Activated CD8-positive, alpha-beta memory T cell treated with anti-CD3 and anti-CD28 coated beads, Interleukin-2, amount 10 ng/mL, durations not matched to agents 7 days and 5 days (primary cell): ENCODE measurements at regions of chr9 and their contacts with region 1.

Region 1: GRCh38 chr9:85425153-85425611 is 316.6 kb downstream of the AGTPBP1 start:
- DNase-seq: peak; percentile 63
- ATAC-seq: peak; percentile 55
- H3K4me3 Mint-ChIP-seq: no peak overlapping the region
- H3K27ac Mint-ChIP-seq: no peak overlapping the region
- H3K4me1 Mint-ChIP-seq: peaks cover 7% of the 10 kb centered on the region
- H3K27me3 Mint-ChIP-seq: peaks cover 13% of the 10 kb centered on the region

Region 2: DNA sequence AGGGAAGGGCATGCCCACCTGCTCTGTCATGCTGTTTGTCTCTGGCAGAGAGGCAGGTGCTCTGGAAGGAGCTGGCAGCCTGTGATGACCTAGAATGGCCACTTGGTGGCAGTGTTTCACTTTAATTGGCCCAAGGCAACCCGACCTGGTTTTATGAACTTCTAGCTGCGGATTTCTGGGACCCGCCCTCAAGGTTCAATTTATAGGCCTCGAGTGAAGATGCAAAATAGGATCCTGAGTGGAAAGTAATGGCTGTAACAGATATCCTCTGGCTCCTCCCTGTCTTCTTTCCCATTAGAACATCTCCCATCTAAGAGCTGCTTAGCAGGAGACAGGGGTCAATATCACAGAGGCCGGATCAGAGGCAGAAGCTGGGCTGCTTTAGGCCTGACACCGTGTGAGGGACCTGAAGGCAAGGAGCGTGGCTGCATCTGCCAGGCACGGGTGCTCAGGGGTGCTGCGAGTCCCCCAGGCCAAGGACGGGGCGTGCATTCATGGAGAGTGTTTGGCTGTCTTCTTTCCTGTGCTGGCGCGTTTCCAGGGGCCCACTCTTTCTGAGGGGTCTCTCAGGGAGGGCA is 1027.9 kb before region 1 on chr9:
- CTCF ChIA-PET with region 1: interaction called, 11 read pairs
- DNase-seq: peak; percentile 71
- ATAC-seq: peak; percentile 71
- H3K4me3 Mint-ChIP-seq: no peak overlapping the region
- H3K27ac Mint-ChIP-seq: no peak overlapping the region
- H3K4me1 Mint-ChIP-seq: no peaks in the 10 kb centered on the region
- H3K27me3 Mint-ChIP-seq: no peaks in the 10 kb centered on the region

Region 3: GRCh38 chr9:85610074-85610860 is 185.1 kb after region 1 on chr9:
- CTCF ChIA-PET with region 1: interaction called, 15 read pairs
- DNase-seq: peak; percentile 55
- ATAC-seq: peak; percentile 85
- H3K4me3 Mint-ChIP-seq: peak overlapping the region; percentile 46
- H3K27ac Mint-ChIP-seq: peak overlapping the region; percentile 79
- H3K4me1 Mint-ChIP-seq: peaks cover 8% of the 10 kb centered on the region
- H3K27me3 Mint-ChIP-seq: no peaks in the 10 kb centered on the region